Common myeloid progenitor, CD34-positive (primary cell): ENCODE measurements at regions of chr7 and their contacts with region 1.

Region 1: DNA sequence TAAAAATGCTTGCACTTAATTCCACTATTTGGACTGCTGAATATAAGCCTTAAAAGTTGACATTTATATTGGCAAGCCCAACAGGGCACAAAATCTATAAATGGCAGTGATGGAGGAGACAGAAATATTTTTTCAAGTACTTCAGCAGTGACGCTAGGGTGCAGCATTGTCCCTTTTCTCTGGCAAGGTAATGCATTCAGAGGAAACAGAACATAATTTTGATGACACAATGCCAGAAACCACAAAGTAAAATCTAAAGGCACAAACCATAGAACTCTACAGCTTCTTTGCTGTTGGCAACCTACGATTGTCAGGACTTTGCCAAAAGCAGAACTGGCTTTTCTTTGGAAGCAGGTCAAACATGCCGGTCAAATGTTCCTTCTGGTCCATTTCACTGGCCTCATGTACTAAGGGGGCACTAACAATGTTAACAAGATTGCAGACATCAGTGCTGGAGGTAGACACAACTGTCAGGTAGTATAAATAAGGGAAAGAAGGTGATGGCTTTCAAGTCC is 30.9 kb upstream of the FAM133B start:
- DNase-seq: peak; percentile 97 to 99 (median 98)
- H3K4me3 ChIP-seq: peak overlapping the region in 2 of 7 experiments; percentile 8 to 12
- H3K27ac ChIP-seq: peak overlapping the region; percentile 3 to 77
- H3K4me1 ChIP-seq: peaks cover 18 to 54% (median 38%) of the 10 kb centered on the region in 4 experiments
- H3K27me3 ChIP-seq: no peaks in the 10 kb centered on the region

Region 2: GRCh38 chr7:92400013-92400412 is 221.1 kb before region 1 on chr7:
- CTCF ChIA-PET with region 1: no interaction called
- POLR2A ChIA-PET with region 1: no interaction called
- DNase-seq: no peak
- H3K4me3 ChIP-seq: no peak overlapping the region
- H3K27ac ChIP-seq: no peak overlapping the region
- H3K4me1 ChIP-seq: peaks cover 6 to 18% (median 10%) of the 10 kb centered on the region in 4 experiments
- H3K27me3 ChIP-seq: no peaks in the 10 kb centered on the region

Region 3: DNA sequence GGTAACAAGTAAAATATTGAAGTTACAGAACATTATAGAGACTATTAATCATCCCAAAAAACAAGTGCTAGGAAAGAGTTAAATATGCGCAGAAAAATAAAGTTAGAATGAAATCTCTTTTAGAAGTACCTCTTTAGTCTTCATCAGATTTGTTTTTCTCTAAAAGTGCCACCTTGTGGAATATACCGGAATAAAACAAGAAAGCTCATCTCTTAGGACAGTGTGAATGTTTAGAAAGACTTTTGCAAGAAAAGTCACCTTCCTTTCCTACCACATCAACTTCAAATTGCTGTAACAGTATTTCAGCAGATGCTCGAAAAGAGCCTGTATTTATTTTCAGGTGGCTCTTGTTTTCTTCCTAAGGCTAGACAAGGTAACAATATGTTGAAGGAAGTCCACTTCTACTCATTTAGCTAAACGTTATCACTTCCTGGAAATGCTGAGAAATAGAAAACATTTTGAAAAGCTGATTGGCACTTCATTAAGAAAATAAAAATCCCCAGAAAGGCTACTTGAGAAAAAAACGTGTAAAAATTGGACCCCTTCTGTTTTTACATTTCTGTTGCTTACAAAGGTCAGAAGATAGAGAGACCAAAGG is 11.1 kb before region 1 on chr7:
- CTCF ChIA-PET with region 1: interaction called, 15 read pairs
- POLR2A ChIA-PET with region 1: no interaction called
- DNase-seq: peak; percentile 45 to 71 (median 71)
- H3K4me3 ChIP-seq: no peak overlapping the region
- H3K27ac ChIP-seq: peak overlapping the region in 1 of 2 experiments; percentile 38
- H3K4me1 ChIP-seq: peaks cover 0 to 7% (median 0%) of the 10 kb centered on the region in 4 experiments
- H3K27me3 ChIP-seq: no peaks in the 10 kb centered on the region

Region 4: DNA sequence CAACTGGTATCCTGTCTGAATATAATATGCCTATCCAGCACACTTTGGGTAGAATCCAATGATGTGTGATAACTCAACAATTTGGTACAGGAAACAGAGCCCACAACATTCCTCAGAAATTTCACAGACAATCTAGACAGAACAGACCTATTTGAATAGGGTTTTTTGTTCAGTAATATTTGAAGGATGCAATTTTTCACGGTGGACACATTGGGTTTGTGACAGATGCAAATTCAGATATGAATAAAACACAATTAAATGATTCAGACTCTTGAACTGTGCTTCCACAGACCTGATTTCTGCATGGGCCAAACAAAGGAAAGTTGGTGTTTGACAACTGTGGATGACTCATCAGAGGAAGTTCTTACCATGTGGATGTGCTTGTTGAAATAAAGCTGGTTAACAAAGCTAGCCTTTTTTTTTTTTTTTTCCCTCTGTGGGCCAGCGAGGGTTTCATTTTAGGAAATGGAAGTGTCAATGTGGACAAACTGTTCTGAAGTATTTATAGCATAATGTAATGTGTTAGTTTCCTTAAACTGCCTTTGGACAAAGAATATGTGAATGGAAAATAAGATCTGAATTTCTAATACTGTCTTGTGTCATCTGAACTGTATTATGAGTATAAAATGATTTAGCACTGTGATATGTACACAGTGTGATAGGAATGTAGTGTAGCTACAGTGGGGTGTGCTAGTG is 12.3 kb after region 1 on chr7:
- CTCF ChIA-PET with region 1: interaction called, 26 read pairs
- POLR2A ChIA-PET with region 1: interaction called, 3 read pairs
- DNase-seq: peak; percentile 92 to 99 (median 98)
- H3K4me3 ChIP-seq: peak overlapping the region in 2 of 7 experiments; percentile 16 to 30
- H3K27ac ChIP-seq: peak overlapping the region; percentile 74 to 90
- H3K4me1 ChIP-seq: peaks cover 51 to 79% (median 68%) of the 10 kb centered on the region in 4 experiments
- H3K27me3 ChIP-seq: no peaks in the 10 kb centered on the region

Region 5: GRCh38 chr7:92661651-92662050 is 40.6 kb after region 1 on chr7:
- CTCF ChIA-PET with region 1: interaction called, 10 read pairs
- POLR2A ChIA-PET with region 1: no interaction called
- DNase-seq: peak in 1 of 3 donors; percentile 44
- H3K4me3 ChIP-seq: no peak overlapping the region
- H3K27ac ChIP-seq: peak overlapping the region in 1 of 2 experiments; percentile 46
- H3K4me1 ChIP-seq: peaks cover 9 to 75% (median 32%) of the 10 kb centered on the region in 4 experiments
- H3K27me3 ChIP-seq: no peaks in the 10 kb centered on the region

Region 6: DNA sequence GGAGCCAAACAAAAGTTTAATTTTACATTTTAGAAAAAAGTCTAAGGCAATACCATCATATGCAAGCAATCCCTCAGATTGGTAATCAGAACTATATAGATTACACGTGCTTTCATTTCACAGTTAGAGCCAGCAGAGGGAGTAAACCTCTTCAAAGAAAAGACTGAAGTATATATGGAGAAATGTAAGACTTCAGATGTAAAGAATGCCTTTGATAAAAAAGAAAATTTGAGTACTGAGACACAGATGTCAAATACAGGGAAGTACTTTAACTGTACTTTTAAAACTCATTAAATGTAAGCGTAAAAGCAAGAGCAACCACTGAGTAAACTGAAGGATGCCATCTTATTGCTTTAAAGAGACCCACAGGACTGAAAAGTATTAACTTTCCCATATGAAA is 70.5 kb after region 1 on chr7:
- CTCF ChIA-PET with region 1: interaction called, 17 read pairs
- POLR2A ChIA-PET with region 1: no interaction called
- DNase-seq: peak; percentile 73 to 85 (median 84)
- H3K4me3 ChIP-seq: no peak overlapping the region
- H3K27ac ChIP-seq: peak overlapping the region; percentile 37 to 45
- H3K4me1 ChIP-seq: peaks cover 0 to 31% (median 14%) of the 10 kb centered on the region in 4 experiments
- H3K27me3 ChIP-seq: no peaks in the 10 kb centered on the region

Region 7: DNA sequence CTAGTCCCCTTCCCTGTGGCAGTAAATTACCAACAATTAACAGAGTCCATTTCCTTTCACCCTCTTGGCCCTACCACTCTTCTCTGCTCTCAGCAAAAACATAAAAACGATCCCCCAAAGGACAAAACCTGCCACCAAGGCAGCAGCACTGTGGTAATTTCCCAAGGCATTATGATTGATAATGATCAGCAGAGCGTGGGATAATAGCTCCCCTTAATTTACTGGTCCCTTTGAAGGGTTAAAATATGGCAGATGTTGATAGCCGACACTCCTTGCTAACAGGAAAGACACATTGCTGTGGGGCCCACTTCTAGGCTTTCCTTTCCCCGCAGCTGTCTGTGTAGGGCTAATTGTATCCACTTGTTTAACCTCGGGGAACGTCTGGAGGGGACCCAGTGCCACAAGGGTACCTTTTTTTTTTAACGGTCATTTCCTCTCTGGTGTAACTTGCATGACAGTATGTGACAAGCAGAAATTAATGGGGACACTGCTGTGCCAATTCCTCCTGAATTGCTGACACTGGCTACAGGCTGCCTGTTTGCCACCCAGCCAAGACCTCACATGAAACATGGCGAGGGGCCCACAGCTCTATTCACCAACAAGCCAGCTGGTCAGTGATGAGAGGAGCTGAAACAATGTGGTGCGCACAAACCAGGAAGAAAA is 134.0 kb after region 1 on chr7:
- CTCF ChIA-PET with region 1: interaction called, 11 read pairs
- POLR2A ChIA-PET with region 1: interaction called, 10 read pairs
- DNase-seq: peak; percentile 88 to 99 (median 98)
- H3K4me3 ChIP-seq: peak overlapping the region in 6 of 7 experiments; percentile 17 to 52 (median 26)
- H3K27ac ChIP-seq: peak overlapping the region; percentile 93 to 97
- H3K4me1 ChIP-seq: peaks cover 39 to 86% (median 58%) of the 10 kb centered on the region in 4 experiments
- H3K27me3 ChIP-seq: no peaks in the 10 kb centered on the region

Region 8: GRCh38 chr7:92833024-92833765 is 212.1 kb after region 1 on chr7:
- CTCF ChIA-PET with region 1: interaction called, 51 read pairs
- POLR2A ChIA-PET with region 1: interaction called, 19 read pairs
- DNase-seq: peak; percentile 85 to 94 (median 92)
- H3K4me3 ChIP-seq: peak overlapping the region; percentile 79 to 100 (median 97)
- H3K27ac ChIP-seq: peak overlapping the region; percentile 86 to 95
- H3K4me1 ChIP-seq: peaks cover 24 to 51% (median 47%) of the 10 kb centered on the region in 4 experiments
- H3K27me3 ChIP-seq: no peaks in the 10 kb centered on the region